ENCODE measurements at regions of chr3 and their contacts with region 1.

Region 1: DNA sequence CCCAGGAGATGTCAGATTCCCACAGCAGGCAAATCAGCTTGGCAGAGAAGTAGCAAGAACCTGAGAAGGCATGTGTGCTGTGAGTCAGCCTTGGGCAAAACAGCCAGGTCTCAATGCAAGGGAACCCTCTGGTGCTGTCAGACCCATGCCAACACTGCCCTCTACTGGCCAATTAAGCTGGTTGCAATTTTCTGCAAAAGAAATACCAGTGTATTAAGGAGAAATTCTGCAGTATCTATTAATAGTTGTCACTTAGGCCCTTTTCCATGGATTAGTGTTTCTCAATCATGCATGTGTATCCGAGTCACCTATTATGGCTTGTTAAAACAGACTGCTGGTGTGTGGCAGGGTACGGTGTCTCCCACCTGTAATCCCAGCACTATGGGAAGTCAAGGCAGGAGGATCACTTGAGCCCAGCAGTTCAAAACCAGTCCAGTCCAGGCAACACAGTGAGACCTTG is 26.2 kb downstream of the MAP4 start:
- DNase-seq: peak; percentile 59
- H3K4me3 ChIP-seq: no peak overlapping the region
- H3K27me3 ChIP-seq: no peaks in the 10 kb centered on the region
- CTCF ChIP-seq: peak; percentile 85

Region 2: GRCh38 chr3:47836986-47837385 is 153.0 kb before region 1 on chr3:
- CTCF ChIA-PET with region 1: interaction called, 26 read pairs
- POLR2A ChIA-PET with region 1: no interaction called
- DNase-seq: no peak
- H3K4me3 ChIP-seq: no peak overlapping the region
- H3K27me3 ChIP-seq: no peaks in the 10 kb centered on the region
- CTCF ChIP-seq: no peak

Region 3: GRCh38 chr3:47961815-47962618 is 28.0 kb before region 1 on chr3:
- CTCF ChIA-PET with region 1: interaction called, 14 read pairs
- POLR2A ChIA-PET with region 1: no interaction called
- DNase-seq: peak; percentile 23
- H3K4me3 ChIP-seq: no peak overlapping the region
- H3K27me3 ChIP-seq: no peaks in the 10 kb centered on the region
- CTCF ChIP-seq: no peak

Region 4: DNA sequence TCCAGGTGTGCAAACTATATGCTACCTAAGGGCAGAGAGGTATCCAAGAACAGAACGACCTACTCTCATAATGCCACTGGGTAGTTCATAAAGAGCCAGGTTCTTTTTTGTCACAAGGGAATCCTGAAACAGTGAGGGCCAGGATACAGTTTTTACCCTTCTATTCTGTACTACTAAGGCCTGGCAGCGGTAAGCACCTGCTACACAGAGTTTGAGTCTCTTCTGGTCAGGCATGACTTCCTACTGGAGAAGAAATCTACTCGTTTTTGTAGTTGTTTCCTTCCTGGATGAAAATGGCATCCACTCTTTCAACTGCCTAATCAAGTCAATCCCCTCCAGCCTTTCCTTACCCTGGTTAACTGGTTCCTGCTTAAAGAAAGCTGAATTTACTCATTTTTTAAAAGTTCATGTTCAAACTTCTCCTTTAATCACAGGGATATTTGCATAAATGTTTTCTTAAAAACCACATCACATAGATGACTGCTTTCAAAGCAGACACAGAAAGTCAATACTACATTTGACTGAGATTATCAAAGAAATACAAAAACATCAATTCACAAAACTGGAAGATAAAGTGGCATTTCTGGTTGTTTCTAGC is 13.8 kb before region 1 on chr3:
- CTCF ChIA-PET with region 1: interaction called, 16 read pairs
- POLR2A ChIA-PET with region 1: no interaction called
- DNase-seq: no peak
- H3K4me3 ChIP-seq: no peak overlapping the region
- H3K27me3 ChIP-seq: no peaks in the 10 kb centered on the region
- CTCF ChIP-seq: no peak

Region 5: GRCh38 chr3:48001991-48002390 is 12.0 kb after region 1 on chr3:
- CTCF ChIA-PET with region 1: interaction called, 11 read pairs
- POLR2A ChIA-PET with region 1: no interaction called
- DNase-seq: no peak
- H3K4me3 ChIP-seq: no peak overlapping the region
- H3K27me3 ChIP-seq: no peaks in the 10 kb centered on the region
- CTCF ChIP-seq: no peak

Region 6: DNA sequence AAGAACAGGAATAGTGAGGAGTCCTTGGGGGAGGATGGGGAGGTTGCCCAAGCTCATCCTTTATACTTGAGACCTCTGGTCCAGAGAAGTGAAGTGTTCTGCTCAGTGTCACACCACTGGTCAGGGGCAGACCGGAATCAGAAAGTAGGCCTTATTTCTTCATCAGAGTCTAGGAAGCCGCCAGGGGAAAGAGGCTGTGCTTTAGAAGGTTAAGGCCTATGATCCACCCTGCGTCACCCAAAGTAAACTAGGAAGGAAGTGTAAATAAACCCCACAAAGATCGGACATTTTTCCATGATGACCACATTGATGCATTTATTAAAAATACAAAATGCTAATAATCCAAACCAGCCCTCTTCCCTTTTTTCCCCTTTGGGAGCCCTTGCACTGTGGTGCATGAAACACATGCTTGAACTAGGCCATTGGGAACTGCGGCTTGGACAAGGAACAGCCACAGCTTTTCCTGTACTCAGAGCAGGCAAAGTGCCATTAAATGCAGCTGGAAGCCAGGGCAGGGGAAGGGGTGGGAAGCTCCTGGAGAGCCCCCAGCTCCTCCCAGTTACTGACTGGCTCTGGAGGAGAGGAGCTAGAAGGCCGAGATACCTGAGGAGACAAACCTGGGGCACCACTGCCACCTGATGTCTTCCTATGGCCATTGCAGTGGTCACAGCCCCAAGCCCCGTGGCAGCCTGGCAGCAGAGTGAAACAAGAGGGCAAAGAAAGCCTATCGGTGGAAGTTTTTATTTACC is 161.2 kb after region 1 on chr3:
- CTCF ChIA-PET with region 1: interaction called, 17 read pairs
- POLR2A ChIA-PET with region 1: no interaction called
- DNase-seq: no peak
- H3K4me3 ChIP-seq: no peak overlapping the region
- H3K27me3 ChIP-seq: no peaks in the 10 kb centered on the region
- CTCF ChIP-seq: peak; percentile 85

Region 7: DNA sequence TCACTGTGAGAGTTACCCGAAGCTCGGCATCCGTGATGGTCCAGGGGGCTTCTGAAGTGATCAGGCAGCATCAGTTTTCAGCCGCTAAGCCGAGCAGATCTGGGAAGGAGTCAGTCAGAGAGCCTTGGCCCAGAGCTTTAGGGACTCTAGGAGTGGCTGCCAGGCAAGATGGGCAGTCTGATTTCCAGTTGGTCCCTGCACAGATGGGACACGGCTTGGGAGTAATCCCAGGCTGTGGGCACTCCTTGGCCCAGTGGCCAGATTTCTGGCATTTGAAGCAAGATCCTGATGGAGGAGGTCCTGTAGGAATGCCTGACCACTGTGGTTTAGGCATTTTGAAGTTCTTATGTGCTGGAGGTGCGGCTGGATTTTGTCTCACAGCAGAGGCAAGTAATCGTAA is 737.5 kb after region 1 on chr3:
- CTCF ChIA-PET with region 1: no interaction called
- POLR2A ChIA-PET with region 1: no interaction called
- DNase-seq: no peak
- H3K4me3 ChIP-seq: no peak overlapping the region
- H3K27me3 ChIP-seq: peaks cover 3% of the 10 kb centered on the region; the same call in 1 of the 2 replicates
- CTCF ChIP-seq: no peak